Panc1 (cell line): ENCODE measurements at regions of chr7 and their contacts with region 1.

Region 1: DNA sequence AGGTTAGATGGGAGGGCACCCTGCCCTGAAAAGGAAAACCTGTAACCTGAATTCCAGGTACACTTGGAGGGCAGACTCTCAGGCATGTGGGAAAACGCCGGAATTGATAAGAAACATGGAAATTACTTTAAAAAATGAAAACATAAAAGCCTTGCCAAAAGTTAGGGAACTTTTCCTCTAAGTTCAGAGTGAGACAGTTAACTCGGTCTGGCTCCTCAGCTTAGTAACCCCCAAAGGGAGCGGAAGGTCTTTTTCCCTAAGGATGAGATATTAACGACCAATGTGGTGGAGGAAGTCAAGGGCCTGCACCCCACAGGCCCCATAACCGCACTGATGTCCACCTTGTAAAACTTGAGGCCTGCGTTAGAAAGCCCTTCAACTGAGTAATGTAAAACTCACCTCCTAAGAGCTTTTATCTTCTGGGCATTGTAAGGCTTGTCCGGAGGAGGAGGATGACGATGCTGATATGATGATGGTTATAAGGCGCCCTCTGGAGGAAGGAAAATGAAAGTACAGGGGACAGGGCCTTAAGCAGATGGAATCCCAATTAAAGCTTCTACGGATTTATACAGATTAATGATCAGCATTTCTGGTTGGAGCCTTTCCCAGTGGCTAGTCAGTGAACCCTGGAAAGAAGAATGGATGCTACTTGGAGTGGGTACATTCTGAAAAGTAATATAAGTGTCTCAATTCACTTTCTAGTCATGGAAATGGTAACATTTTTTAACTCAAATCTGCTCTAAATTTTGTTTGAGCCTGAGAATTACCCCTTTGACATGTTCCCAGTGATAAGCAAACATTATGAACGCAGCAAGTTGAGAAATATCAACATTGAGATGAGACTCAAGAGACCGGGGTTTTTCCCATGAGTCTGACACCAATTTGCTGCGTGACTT is 694 bp downstream of the COL1A2 start:
- DNase-seq: peak; percentile 62
- ATAC-seq: peak; percentile 95
- H3K4me3 ChIP-seq: no peak overlapping the region
- H3K27ac ChIP-seq: no peak overlapping the region
- H3K4me1 ChIP-seq: no peaks in the 10 kb centered on the region
- H3K27me3 ChIP-seq: no peaks in the 10 kb centered on the region
- CTCF ChIP-seq: peak; percentile 81

Region 2: DNA sequence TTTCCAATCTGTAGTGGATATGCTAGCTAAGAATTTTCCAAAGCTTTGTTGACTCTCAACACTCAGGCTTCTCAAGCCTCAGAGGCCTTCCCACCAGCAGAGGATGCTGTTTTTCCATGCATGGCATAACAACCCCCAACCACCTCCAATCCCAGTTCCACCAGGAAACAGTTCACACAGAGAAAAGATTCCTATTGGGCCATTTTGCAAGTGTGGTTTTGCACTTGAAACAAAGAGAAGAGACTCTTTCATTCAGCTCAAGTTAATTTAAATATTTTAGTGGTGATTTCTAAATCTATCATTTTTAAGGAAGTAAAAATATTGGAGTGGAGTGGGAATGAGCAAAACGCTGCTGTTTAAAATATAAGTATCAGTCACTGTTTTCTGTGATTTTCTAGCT is 106.3 kb before region 1 on chr7:
- CTCF ChIA-PET with region 1: interaction called, 11 read pairs
- POLR2A ChIA-PET with region 1: no interaction called
- in situ Hi-C with region 1: no loop called
- intact Hi-C with region 1: loop called (anchors 5 kb)
- DNase-seq: peak; percentile 32
- ATAC-seq: peak; percentile 89; the same call in 1 of the 2 replicates
- H3K4me3 ChIP-seq: no peak overlapping the region
- H3K27ac ChIP-seq: no peak overlapping the region
- H3K4me1 ChIP-seq: no peaks in the 10 kb centered on the region
- H3K27me3 ChIP-seq: no peaks in the 10 kb centered on the region; the same call in 1 of the 2 replicates
- CTCF ChIP-seq: peak; percentile 93

Region 3: GRCh38 chr7:94295850-94296249 is 99.5 kb before region 1 on chr7:
- CTCF ChIA-PET with region 1: interaction called, 19 read pairs
- POLR2A ChIA-PET with region 1: no interaction called
- in situ Hi-C with region 1: no loop called
- intact Hi-C with region 1: no loop called
- DNase-seq: no peak
- ATAC-seq: no peak; the same call in 1 of the 2 replicates
- H3K4me3 ChIP-seq: no peak overlapping the region
- H3K27ac ChIP-seq: no peak overlapping the region
- H3K4me1 ChIP-seq: peaks cover 7% of the 10 kb centered on the region; the same call in 1 of the 2 replicates
- H3K27me3 ChIP-seq: no peaks in the 10 kb centered on the region
- CTCF ChIP-seq: peak; percentile 53

Region 4: DNA sequence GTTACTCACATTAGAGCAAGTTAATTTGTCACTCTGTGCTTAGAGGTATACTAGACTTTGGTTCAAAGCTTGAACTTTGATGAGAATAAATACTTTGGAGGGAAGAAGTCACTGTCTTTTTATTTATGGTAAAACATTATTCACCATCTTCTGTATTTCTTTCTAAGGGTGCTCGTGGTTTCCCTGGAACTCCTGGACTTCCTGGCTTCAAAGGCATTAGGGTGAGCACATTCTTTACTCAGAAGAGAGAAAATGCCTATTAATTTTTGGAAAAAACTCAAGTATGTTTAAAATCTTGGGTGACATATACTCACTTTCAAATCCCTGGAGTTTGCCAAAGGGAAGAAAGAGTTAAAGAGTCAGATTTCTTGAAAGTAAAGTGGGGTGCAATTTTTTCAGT is 10.1 kb after region 1 on chr7:
- CTCF ChIA-PET with region 1: interaction called, 11 read pairs
- POLR2A ChIA-PET with region 1: no interaction called
- in situ Hi-C with region 1: no loop called
- intact Hi-C with region 1: no loop called
- DNase-seq: no peak
- ATAC-seq: no peak
- H3K4me3 ChIP-seq: no peak overlapping the region
- H3K27ac ChIP-seq: no peak overlapping the region
- H3K4me1 ChIP-seq: no peaks in the 10 kb centered on the region
- H3K27me3 ChIP-seq: no peaks in the 10 kb centered on the region
- CTCF ChIP-seq: no peak